H1 (cell line): ENCODE measurements at regions of chr3 and their contacts with region 1.

Region 1: GRCh38 chr3:39174751-39175426 is 17.5 kb downstream of the XIRP1 start:
- DNase-seq: no peak
- H3K4me3 ChIP-seq: no peak overlapping the region
- H3K27ac ChIP-seq: no peak overlapping the region
- H3K4me1 ChIP-seq: peaks cover 2 to 14% (median 9%) of the 10 kb centered on the region in 4 experiments; a peak in 6 of 7 replicates
- H3K27me3 ChIP-seq: peaks cover 0 to 10% (median 8%) of the 10 kb centered on the region in 4 experiments; a peak in 5 of 7 replicates
- CTCF ChIP-seq: no peak
- EP300 ChIP-seq: no peak
- POLR2A ChIP-seq: no peak
- RAD21 ChIP-seq: no peak

Region 2: GRCh38 chr3:39154280-39155021 is 20.4 kb before region 1 on chr3:
- CTCF ChIA-PET with region 1: interaction called, 10 read pairs
- POLR2A ChIA-PET with region 1: interaction called, 6 read pairs
- DNase-seq: peak; percentile 84 to 85
- H3K4me3 ChIP-seq: peak overlapping the region; percentile 50 to 85 (median 60)
- H3K27ac ChIP-seq: peak overlapping the region; percentile 78
- H3K4me1 ChIP-seq: peaks cover 22 to 40% (median 26%) of the 10 kb centered on the region in 4 experiments
- H3K27me3 ChIP-seq: no peaks in the 10 kb centered on the region
- CTCF ChIP-seq: no peak
- EP300 ChIP-seq: no peak
- POLR2A ChIP-seq: peak in 1 of 2 experiments; percentile 79; a peak in 1 of 3 replicates
- RAD21 ChIP-seq: 0 out of 4 replicates have a peak, but pooled peaks have one; percentile 2 to 13

Region 3: GRCh38 chr3:39216176-39216790 is 41.4 kb after region 1 on chr3:
- CTCF ChIA-PET with region 1: no interaction called
- POLR2A ChIA-PET with region 1: no interaction called
- DNase-seq: no peak
- H3K4me3 ChIP-seq: no peak overlapping the region
- H3K27ac ChIP-seq: no peak overlapping the region
- H3K4me1 ChIP-seq: peaks cover 0 to 5% (median 4%) of the 10 kb centered on the region in 4 experiments; a peak in 4 of 7 replicates
- H3K27me3 ChIP-seq: no peaks in the 10 kb centered on the region; a peak in 1 of 7 replicates
- CTCF ChIP-seq: no peak
- EP300 ChIP-seq: no peak
- POLR2A ChIP-seq: no peak
- RAD21 ChIP-seq: no peak